ENCODE measurements at regions of chr2 and their contacts with region 1.

Region 1: GRCh38 chr2:240513549-240514287 is 44.1 kb downstream of the ANKMY1 start:
- DNase-seq: peak; percentile 90
- H3K4me3 Mint-ChIP-seq: no peak overlapping the region
- H3K27ac Mint-ChIP-seq: peak overlapping the region; percentile 20
- H3K4me1 Mint-ChIP-seq: peaks cover 12% of the 10 kb centered on the region
- H3K27me3 Mint-ChIP-seq: no peaks in the 10 kb centered on the region
- CTCF ChIP-seq: peak; percentile 91

Region 2: DNA sequence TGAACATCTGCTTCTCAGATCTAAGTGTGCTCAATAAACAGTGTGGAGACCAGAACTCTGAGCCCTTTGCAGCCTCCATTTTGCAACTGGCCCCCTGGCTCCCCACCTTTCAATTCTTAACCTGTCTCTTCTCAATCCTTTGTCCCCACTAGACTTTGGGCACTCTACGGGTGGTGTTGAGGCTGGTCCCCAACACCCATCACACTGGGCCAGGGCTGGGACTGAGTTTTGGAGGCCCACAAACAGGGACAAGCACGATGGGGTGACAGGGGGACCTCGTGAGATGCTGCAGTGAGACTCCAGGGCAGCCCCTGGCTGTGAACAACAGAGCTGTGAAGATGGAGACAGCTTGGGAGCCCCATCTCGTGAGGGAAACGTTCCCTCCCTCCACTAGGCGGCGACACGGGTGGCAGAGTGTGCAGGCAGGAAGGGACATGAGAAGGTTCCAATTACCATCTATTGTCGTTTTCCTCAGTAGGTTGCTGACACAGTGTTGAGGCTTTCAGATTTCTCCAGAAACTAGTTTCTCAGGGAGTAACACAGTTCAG is 42.9 kb after region 1 on chr2:
- CTCF ChIA-PET with region 1: interaction called, 13 read pairs
- intact Hi-C with region 1: no loop called
- DNase-seq: peak; percentile 84
- H3K4me3 Mint-ChIP-seq: peak overlapping the region; percentile 93
- H3K27ac Mint-ChIP-seq: peak overlapping the region; percentile 30
- H3K4me1 Mint-ChIP-seq: peaks cover 26% of the 10 kb centered on the region
- H3K27me3 Mint-ChIP-seq: no peaks in the 10 kb centered on the region
- CTCF ChIP-seq: peak; percentile 74

Region 3: DNA sequence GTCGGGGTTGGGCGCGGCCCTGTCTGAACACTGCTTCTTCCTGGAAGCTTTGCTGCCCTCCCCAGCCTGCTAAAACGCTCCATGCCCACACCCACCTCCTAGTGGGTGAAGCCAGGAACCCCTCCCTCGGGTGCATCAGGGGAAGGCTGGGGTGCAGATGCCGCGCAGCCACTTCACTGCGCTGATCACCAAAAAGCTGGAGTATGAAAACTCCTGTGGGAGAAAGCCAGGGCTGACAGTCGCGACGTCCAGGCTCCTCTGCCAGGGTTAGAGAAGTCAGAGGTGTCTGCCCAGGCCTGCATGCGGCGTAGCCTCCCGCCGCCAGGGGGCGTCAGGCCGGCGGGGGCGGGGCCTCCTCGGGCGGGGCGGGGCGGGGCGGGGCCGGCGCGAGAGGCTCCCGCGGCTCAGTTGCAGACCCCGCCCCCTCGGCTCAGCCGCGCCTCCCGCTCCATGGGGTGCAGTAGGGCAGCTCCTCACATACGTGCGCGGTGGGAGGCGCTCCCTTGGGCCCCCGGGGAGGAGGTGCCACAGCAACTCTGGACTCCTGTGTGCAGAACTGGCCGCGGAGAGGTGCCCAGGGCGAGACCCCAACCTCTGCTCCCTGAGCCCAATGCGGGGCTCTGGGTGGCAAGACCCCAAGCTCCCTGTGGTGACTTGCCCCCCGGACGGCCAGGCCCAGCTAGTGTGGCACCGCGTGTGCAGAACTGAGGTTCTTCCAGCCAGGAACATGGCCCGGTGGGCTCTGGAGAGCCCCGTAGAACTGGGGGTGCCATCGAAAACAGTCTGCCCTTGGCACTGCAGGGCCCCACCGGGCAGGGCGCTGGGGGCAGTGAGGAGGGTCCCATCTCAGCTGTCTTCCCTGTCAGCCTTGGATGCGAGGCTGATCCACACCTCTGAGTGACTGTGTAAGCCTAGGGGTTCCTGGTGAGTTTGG is 52.8 kb after region 1 on chr2:
- CTCF ChIA-PET with region 1: interaction called, 11 read pairs
- intact Hi-C with region 1: no loop called
- DNase-seq: peak; percentile 97
- H3K4me3 Mint-ChIP-seq: peak overlapping the region; percentile 85
- H3K27ac Mint-ChIP-seq: peak overlapping the region; percentile 97
- H3K4me1 Mint-ChIP-seq: peaks cover 41% of the 10 kb centered on the region
- H3K27me3 Mint-ChIP-seq: no peaks in the 10 kb centered on the region
- CTCF ChIP-seq: peak; percentile 95

Region 4: GRCh38 chr2:240840435-240841080 is 326.8 kb after region 1 on chr2:
- CTCF ChIA-PET with region 1: interaction called, 14 read pairs
- intact Hi-C with region 1: no loop called
- DNase-seq: peak; percentile 87
- H3K4me3 Mint-ChIP-seq: no peak overlapping the region
- H3K27ac Mint-ChIP-seq: no peak overlapping the region
- H3K4me1 Mint-ChIP-seq: no peaks in the 10 kb centered on the region
- H3K27me3 Mint-ChIP-seq: peaks cover 80% of the 10 kb centered on the region
- CTCF ChIP-seq: peak; percentile 86